Sciatic nerve (tissue), 2 donors: ENCODE measurements at regions of chr6 and their contacts with region 1.

Region 1: DNA sequence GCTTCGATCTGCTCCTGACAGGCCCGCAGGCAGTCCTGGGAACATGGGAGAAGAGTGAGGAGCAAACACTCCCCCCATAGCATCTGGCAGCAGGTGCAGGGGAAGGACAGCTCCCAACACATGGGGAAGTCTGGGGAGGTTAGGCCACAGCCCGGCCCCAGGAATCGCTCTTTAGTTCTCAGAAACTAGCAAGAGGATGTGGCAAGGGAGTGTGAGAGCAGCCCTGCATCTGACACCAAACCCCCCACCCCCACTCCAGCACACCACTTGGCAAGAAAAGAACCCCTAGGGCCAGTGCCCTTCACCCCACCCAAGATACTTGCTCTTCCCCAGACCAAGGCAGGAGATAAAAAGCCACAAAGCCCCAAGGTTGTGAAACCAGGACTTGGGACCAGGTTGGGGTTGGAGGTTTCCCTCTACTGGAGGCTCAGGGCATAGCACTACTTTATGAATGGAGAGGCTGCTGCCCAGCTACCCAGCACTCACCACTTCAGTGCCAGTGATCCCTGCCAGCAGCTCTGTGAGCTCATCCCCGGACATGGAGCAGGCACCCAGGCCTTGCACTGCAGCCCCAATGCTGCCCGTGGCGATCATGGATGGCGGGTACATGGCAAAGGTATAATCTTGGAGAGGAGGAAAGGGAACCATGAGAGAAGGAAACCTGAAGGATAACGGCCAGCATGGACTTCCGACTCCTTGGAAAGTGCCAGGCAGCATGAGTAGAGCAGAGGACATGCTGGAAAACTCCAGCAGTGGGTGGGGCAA is 5.4 kb downstream of the CCND3 start:
- DNase-seq: peak; percentile 69
- ATAC-seq: peak; percentile 69

Region 2: GRCh38 chr6:40176152-40176551 is 1760.1 kb before region 1 on chr6:
- intact Hi-C with region 1: no loop called
- DNase-seq: no peak
- ATAC-seq: no peak

Region 3: GRCh38 chr6:41787219-41787917 is 148.9 kb before region 1 on chr6 and contains the start of gene TOMM6:
- intact Hi-C with region 1: loop called (anchors 10 kb)
- DNase-seq: peak; percentile 98
- ATAC-seq: peak; percentile 95
- total RNA-seq, gene TOMM6: 97.3 TPM